Caco-2 (cell line): ENCODE measurements at regions of chr17 and their contacts with region 1.

Region 1: DNA sequence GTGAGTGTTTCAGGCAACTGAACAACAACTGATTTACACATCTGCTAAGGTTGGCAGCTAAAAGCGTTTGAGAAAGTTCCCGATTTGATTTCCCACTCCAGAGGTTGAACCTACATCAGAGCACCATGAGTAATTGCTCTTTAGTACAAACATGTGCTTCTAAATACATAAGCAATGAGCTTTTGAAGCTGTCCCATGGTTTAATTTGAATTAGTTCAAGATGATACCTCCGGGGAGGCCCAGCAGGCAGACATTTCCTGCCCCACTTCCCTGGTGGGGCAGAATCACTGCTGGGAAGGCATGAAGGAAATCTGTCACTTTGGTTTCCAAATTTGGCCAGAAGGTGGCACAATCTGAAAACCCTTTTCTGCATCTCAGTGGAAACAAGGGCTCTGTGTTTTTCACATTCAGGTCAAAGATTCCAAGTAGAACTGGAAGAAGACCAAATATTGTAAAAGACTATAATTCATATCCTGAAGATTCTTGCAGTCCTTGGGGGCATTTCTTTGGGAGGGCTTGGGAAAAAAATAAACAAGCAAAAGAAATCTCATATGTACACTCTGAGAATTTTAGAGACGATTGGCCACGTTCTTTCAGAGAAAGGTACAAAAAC is 176.2 kb upstream of the FAM20A start:
- DNase-seq: peak; percentile 50 to 72
- H3K4me3 ChIP-seq: no peak overlapping the region
- H3K4me3 Mint-ChIP-seq: peak overlapping the region; percentile 62
- H3K27ac Mint-ChIP-seq: peak overlapping the region; percentile 39
- H3K4me1 ChIP-seq: peaks cover 22% of the 10 kb centered on the region
- H3K4me1 Mint-ChIP-seq: peaks cover 6% of the 10 kb centered on the region
- H3K27me3 ChIP-seq: no peaks in the 10 kb centered on the region
- H3K27me3 Mint-ChIP-seq: no peaks in the 10 kb centered on the region
- CTCF ChIP-seq: peak; percentile 73 to 74

Region 2: GRCh38 chr17:68763551-68763950 is 13.8 kb before region 1 on chr17:
- CTCF ChIA-PET with region 1: no interaction called
- POLR2A ChIA-PET with region 1: no interaction called
- intact Hi-C with region 1: no loop called
- DNase-seq: no peak
- H3K4me3 ChIP-seq: no peak overlapping the region
- H3K4me3 Mint-ChIP-seq: no peak overlapping the region
- H3K27ac Mint-ChIP-seq: no peak overlapping the region
- H3K4me1 ChIP-seq: peaks cover 10% of the 10 kb centered on the region
- H3K4me1 Mint-ChIP-seq: peaks cover 7% of the 10 kb centered on the region
- H3K27me3 ChIP-seq: no peaks in the 10 kb centered on the region
- H3K27me3 Mint-ChIP-seq: no peaks in the 10 kb centered on the region
- CTCF ChIP-seq: no peak

Region 3: GRCh38 chr17:68886401-68886800 is 109.1 kb after region 1 on chr17:
- CTCF ChIA-PET with region 1: no interaction called
- POLR2A ChIA-PET with region 1: no interaction called
- intact Hi-C with region 1: no loop called
- DNase-seq: no peak
- H3K4me3 ChIP-seq: no peak overlapping the region
- H3K4me3 Mint-ChIP-seq: no peak overlapping the region
- H3K27ac Mint-ChIP-seq: no peak overlapping the region
- H3K4me1 ChIP-seq: no peaks in the 10 kb centered on the region
- H3K4me1 Mint-ChIP-seq: no peaks in the 10 kb centered on the region
- H3K27me3 ChIP-seq: no peaks in the 10 kb centered on the region
- H3K27me3 Mint-ChIP-seq: peaks cover 3% of the 10 kb centered on the region
- CTCF ChIP-seq: no peak

Region 4: DNA sequence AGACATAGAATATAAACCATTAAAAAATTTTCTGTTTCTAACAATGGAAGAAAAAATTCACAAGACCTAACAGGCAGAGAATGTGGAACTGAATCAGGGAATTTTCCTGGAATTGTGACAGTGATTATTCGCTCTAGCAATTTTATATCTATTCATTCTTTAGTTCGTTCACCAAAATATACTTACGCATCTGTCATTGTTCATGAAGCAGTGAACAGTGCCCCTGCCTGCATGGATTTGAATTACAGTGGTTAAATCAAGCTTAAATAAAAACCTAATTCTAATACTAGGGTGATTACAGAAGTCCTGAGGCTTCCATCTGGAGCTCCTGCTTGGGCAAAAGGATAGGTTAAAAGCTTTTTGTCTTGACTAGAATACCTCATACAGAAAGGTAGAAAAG is 129.3 kb after region 1 on chr17:
- CTCF ChIA-PET with region 1: interaction called, 4 read pairs
- POLR2A ChIA-PET with region 1: no interaction called
- intact Hi-C with region 1: loop called (anchors 1 kb)
- DNase-seq: peak in 1 of 2 experiments; percentile 11
- H3K4me3 ChIP-seq: no peak overlapping the region
- H3K4me3 Mint-ChIP-seq: no peak overlapping the region
- H3K27ac Mint-ChIP-seq: no peak overlapping the region
- H3K4me1 ChIP-seq: peaks cover 5% of the 10 kb centered on the region; the same call in 1 of the 2 replicates
- H3K4me1 Mint-ChIP-seq: peaks cover under 1% of the 10 kb centered on the region
- H3K27me3 ChIP-seq: no peaks in the 10 kb centered on the region
- H3K27me3 Mint-ChIP-seq: no peaks in the 10 kb centered on the region
- CTCF ChIP-seq: peak; percentile 45 to 64

Region 5: DNA sequence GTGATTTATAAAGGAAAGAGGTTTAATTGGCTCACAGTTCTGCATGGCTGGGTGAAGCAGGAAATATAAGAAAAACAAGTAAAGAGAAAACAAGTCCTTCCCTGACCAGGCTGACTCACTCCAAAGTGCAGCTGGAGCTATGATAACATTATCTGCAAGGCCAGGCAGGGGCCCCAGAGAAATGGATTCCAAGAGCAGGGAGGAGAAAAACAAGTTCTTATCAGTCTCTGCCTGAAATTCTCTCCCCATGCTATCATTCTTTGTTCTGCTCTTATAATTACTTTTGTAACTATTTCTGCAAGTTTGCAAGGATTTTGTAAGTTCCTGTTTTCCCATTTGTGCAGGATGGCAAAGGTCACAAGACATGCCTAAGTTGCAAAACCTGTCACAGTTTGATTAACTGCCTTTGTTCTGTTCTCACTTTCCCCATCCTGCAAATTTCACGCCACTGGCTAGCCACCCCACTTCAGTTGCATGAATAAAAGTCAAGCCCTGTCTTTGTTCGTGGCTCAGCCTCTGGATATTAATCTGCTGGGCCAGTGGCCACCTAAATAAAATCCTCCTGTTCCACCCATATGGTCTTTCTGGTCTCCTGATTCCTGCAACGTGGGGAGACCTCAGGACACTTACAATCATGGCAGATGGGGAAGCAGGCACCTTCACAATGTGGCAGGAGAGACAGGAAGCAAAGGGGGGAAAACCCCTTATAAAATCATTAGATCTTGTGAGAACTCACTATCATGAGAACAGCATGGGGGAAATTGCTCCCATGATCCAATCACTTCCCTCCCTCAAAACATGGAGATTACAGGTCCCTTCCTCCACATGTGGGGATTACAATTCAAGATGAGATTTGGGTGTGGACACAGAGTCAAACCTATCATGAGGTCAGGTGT is 270.3 kb after region 1 on chr17:
- CTCF ChIA-PET with region 1: no interaction called
- POLR2A ChIA-PET with region 1: no interaction called
- intact Hi-C with region 1: loop called (anchors 2 kb)
- DNase-seq: peak; percentile 91 to 95
- H3K4me3 ChIP-seq: no peak overlapping the region
- H3K4me3 Mint-ChIP-seq: peak overlapping the region; percentile 30
- H3K27ac Mint-ChIP-seq: peak overlapping the region; percentile 88
- H3K4me1 ChIP-seq: peaks cover 38% of the 10 kb centered on the region
- H3K4me1 Mint-ChIP-seq: peaks cover 7% of the 10 kb centered on the region
- H3K27me3 ChIP-seq: no peaks in the 10 kb centered on the region
- H3K27me3 Mint-ChIP-seq: no peaks in the 10 kb centered on the region
- CTCF ChIP-seq: no peak

Region 6: DNA sequence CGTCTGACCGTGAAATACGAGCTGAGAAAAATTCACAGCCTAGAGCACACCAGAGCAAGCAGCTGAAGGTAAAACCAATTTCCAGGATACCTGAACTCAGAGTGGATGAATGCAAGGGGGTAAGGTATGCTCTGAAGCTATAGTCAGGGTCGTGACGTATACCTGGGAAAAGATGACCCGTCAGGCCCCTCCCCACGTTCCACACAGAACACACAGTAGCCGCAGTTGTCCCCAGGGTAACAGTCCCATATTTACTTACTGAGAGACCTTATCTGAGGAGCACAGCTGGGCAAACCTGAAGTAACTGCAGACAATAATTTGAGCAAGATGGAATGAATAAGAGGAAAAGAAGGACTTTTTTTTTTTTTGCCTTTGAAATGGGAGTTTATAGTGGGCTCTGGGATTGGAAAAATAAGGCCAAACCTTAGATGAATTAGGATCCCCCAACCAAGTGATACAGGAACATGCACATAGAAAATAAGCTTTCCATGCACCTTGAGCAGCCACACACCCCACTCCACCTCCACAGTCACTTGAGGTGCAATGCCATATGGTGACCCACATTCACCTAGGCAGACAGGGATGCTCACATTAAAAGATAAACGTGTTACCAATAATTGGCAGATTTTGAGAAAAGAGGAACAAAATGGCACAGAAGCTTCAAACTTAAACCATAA is 326.3 kb after region 1 on chr17:
- CTCF ChIA-PET with region 1: no interaction called
- POLR2A ChIA-PET with region 1: no interaction called
- intact Hi-C with region 1: loop called (anchors 1 kb)
- DNase-seq: peak; percentile 89
- H3K4me3 ChIP-seq: no peak overlapping the region
- H3K4me3 Mint-ChIP-seq: peak overlapping the region; percentile 30
- H3K27ac Mint-ChIP-seq: peak overlapping the region; percentile 58
- H3K4me1 ChIP-seq: peaks cover 19% of the 10 kb centered on the region
- H3K4me1 Mint-ChIP-seq: peaks cover 7% of the 10 kb centered on the region
- H3K27me3 ChIP-seq: no peaks in the 10 kb centered on the region
- H3K27me3 Mint-ChIP-seq: no peaks in the 10 kb centered on the region
- CTCF ChIP-seq: no peak

Region 7: DNA sequence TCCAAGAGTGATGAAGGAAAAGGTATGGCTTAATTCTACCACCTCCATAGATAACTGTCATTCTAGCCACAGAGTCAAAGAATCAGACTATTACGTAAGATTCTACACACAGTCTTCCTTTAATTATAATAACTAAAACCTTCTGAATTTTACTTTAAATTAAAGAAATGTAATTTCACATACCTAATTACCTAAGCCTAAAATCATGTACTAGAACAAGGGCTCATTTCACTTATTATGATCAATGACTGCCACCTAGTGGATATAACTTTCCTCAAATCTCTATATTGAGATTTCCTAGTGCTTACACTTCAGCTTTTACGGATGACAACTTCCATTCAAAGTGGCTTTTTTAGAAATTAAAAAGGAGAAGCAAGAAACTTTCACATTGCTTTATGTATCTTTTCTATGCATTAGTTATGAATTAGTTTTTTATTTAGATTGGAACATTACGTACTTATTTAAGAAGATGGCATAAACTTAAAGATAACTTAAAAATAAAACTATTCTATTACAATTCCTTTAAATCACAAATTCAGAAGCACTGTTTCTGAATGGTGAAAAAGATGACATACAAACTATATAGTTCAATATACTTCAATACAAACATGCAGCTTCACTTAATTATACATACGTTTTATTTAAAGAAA is 469.5 kb after region 1 on chr17:
- CTCF ChIA-PET with region 1: interaction called, 5 read pairs
- POLR2A ChIA-PET with region 1: no interaction called
- intact Hi-C with region 1: loop called (anchors 1 kb)
- DNase-seq: peak in 1 of 2 experiments; percentile 36
- H3K4me3 ChIP-seq: no peak overlapping the region
- H3K4me3 Mint-ChIP-seq: no peak overlapping the region
- H3K27ac Mint-ChIP-seq: no peak overlapping the region
- H3K4me1 ChIP-seq: no peaks in the 10 kb centered on the region
- H3K4me1 Mint-ChIP-seq: peaks cover 7% of the 10 kb centered on the region
- H3K27me3 ChIP-seq: no peaks in the 10 kb centered on the region
- H3K27me3 Mint-ChIP-seq: no peaks in the 10 kb centered on the region
- CTCF ChIP-seq: peak; percentile 40 to 56